ENCODE measurements at regions of chr19 and their contacts with region 1.

Region 1: DNA sequence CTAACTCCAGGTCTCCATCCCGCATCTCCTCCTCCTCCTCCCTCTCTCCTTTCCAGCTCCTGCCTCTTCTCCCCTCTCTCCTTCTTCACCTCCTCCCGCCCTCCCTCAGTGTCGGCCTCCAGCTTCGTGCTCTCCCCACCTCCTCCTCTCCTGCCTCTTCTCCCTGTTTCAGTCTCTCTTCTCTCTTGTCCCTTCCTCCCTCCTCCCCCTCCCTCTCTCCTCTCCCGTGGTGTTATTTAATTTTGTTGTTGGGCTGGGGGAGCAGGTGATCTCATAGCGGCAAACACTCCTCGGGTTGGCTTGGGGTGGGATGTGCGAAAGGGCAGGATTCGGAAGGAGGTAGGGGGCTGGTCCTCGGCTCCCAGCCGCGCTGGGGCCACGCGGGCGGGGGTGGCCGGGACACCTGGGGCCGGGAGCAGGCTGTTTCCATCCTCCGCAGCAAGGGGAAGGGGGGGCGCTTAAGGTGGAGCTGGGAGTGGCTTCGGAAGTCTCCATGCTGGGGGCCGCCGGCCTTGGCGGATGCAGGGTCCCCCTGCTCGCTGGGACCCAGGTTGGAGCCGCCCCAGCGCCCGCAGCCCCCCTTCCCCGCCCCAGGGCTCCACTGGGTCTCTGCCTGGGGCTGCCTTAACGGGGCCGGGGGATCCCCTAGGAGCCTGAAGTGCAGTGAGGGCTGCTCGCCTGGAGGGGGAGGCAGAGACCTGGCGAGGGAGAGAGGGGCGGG is at the start of gene CA11:
- DNase-seq: peak; percentile 94 to 95
- H3K4me3 ChIP-seq: peak within 1 kb of the TSS; percentile 56
- H3K4me3 Mint-ChIP-seq: peak within 1 kb of the TSS; percentile 77
- H3K27ac Mint-ChIP-seq: peak within 1 kb of the TSS; percentile 69
- H3K4me1 ChIP-seq: peaks cover 9% of the 10 kb centered on the region; the same call in 1 of the 2 replicates
- H3K4me1 Mint-ChIP-seq: peaks cover 16% of the 10 kb centered on the region
- H3K27me3 ChIP-seq: no peaks in the 10 kb centered on the region
- H3K27me3 Mint-ChIP-seq: no peaks in the 10 kb centered on the region
- CTCF ChIP-seq: peak; percentile 93 to 96
- total RNA-seq, gene CA11: 10.5 and 15.9 TPM in 2 replicates

Region 2: DNA sequence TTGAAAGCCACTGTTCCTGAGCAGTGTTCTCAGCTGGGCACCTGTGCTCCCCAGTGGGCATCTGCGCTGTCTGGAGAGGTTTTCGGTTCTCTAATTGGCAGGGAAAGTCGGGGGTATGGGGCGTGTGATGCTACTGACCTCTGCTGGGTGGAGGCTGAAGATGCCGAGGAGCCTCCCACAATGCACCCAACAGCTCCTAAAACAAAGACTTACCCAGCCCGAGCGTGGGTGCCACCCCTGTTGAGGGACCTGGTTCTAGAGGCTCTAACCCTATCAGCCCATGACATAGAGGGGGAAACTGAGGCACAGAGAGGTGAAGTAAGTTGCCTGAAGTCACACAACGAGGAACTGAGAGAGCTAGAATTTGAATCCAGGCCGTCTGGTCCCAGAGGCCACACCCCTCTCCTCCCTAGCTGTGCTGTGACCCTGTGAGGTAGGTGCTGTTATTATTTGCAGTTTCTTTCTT is 37.3 kb before region 1 on chr19:
- CTCF ChIA-PET with region 1: no interaction called
- POLR2A ChIA-PET with region 1: no interaction called
- intact Hi-C with region 1: no loop called
- DNase-seq: peak in 1 of 2 experiments; percentile 70
- H3K4me3 ChIP-seq: no peak overlapping the region
- H3K4me3 Mint-ChIP-seq: peak overlapping the region; percentile 54
- H3K27ac Mint-ChIP-seq: no peak overlapping the region
- H3K4me1 ChIP-seq: no peaks in the 10 kb centered on the region
- H3K4me1 Mint-ChIP-seq: peaks cover 7% of the 10 kb centered on the region
- H3K27me3 ChIP-seq: no peaks in the 10 kb centered on the region
- H3K27me3 Mint-ChIP-seq: no peaks in the 10 kb centered on the region
- CTCF ChIP-seq: peak; percentile 82 to 86

Region 3: GRCh38 chr19:48618916-48619691 is 27.1 kb before region 1 on chr19 and contains the starts of genes RPL18 and SPHK2:
- CTCF ChIA-PET with region 1: no interaction called
- POLR2A ChIA-PET with region 1: interaction called, 12 read pairs
- intact Hi-C with region 1: no loop called
- DNase-seq: peak; percentile 99
- H3K4me3 ChIP-seq: peak within 1 kb of the TSS; percentile 85
- H3K4me3 Mint-ChIP-seq: peak within 1 kb of the TSS; percentile 96
- H3K27ac Mint-ChIP-seq: peak within 1 kb of the TSS; percentile 98
- H3K4me1 ChIP-seq: peaks cover 39% of the 10 kb centered on the region
- H3K4me1 Mint-ChIP-seq: peaks cover 36% of the 10 kb centered on the region
- H3K27me3 ChIP-seq: no peaks in the 10 kb centered on the region
- H3K27me3 Mint-ChIP-seq: no peaks in the 10 kb centered on the region
- CTCF ChIP-seq: no peak
- total RNA-seq, gene RPL18: 1,812 and 1,896 TPM in 2 replicates
- total RNA-seq, gene SPHK2: 134 and 140 TPM in 2 replicates

Region 4: GRCh38 chr19:48668332-48668731 is 22.2 kb after region 1 on chr19:
- CTCF ChIA-PET with region 1: no interaction called
- POLR2A ChIA-PET with region 1: no interaction called
- intact Hi-C with region 1: no loop called
- DNase-seq: no peak
- H3K4me3 ChIP-seq: no peak overlapping the region
- H3K4me3 Mint-ChIP-seq: no peak overlapping the region
- H3K27ac Mint-ChIP-seq: no peak overlapping the region
- H3K4me1 ChIP-seq: peaks cover 16% of the 10 kb centered on the region
- H3K4me1 Mint-ChIP-seq: peaks cover 7% of the 10 kb centered on the region
- H3K27me3 ChIP-seq: no peaks in the 10 kb centered on the region
- H3K27me3 Mint-ChIP-seq: no peaks in the 10 kb centered on the region
- CTCF ChIP-seq: no peak

Region 5: GRCh38 chr19:48685583-48685982 is 39.4 kb after region 1 on chr19:
- CTCF ChIA-PET with region 1: interaction called, 4 read pairs
- POLR2A ChIA-PET with region 1: no interaction called
- intact Hi-C with region 1: loop called (anchors 5 kb)
- DNase-seq: peak; percentile 68 to 74
- H3K4me3 ChIP-seq: no peak overlapping the region
- H3K4me3 Mint-ChIP-seq: peak overlapping the region; percentile 11
- H3K27ac Mint-ChIP-seq: peak overlapping the region; percentile 54
- H3K4me1 ChIP-seq: peaks cover 39% of the 10 kb centered on the region
- H3K4me1 Mint-ChIP-seq: peaks cover 11% of the 10 kb centered on the region
- H3K27me3 ChIP-seq: no peaks in the 10 kb centered on the region
- H3K27me3 Mint-ChIP-seq: no peaks in the 10 kb centered on the region
- CTCF ChIP-seq: no peak

Region 6: DNA sequence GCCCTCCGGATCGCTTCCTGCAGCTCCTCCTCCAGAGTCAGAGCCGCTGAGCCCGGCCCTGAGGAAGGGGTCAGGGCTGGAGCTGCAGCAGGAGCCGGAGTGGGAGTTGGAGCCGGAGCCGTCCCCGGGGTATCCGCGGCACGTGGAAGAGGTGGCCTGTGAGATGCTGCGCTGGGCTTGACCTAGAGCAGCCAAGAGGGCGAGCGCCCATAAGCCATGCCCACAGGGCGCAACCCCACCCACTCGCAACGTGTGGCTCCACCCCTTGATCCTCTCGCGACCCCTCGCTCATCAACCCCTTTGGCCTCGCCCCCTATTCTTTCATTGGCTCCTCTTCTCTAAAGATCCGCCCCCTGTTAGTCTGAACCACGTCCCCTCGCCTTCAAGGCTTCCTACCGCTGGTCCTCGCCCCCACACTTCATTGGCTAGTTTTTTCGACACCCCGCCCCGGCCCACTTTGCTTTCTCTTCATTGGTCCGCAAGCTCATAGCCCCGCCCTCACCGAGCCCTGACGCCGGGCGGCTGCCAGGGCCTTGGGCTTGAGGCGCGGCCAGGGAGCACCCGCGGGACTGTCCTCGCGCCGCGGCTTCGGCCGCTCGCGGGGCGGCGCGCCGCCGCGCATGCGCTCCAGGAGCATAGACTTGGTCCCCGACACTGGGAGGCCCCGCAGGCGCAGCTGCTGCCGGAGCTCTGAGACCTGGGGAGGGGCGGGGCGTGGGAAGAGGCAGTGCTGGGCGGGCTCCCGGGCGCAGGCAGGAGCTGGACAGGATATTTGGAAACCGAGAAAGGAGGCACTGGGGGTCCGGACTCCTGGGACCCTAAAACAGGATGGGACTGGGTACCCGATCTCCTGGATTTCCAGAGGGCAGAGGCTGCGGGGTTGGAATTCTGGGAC is 68.0 kb after region 1 on chr19:
- CTCF ChIA-PET with region 1: interaction called, 8 read pairs
- POLR2A ChIA-PET with region 1: interaction called, 9 read pairs
- intact Hi-C with region 1: loop called (anchors 1 kb)
- DNase-seq: peak; percentile 100
- H3K4me3 ChIP-seq: peak overlapping the region; percentile 75
- H3K4me3 Mint-ChIP-seq: peak overlapping the region; percentile 84
- H3K27ac Mint-ChIP-seq: peak overlapping the region; percentile 90
- H3K4me1 ChIP-seq: peaks cover 16% of the 10 kb centered on the region
- H3K4me1 Mint-ChIP-seq: peaks cover 33% of the 10 kb centered on the region
- H3K27me3 ChIP-seq: no peaks in the 10 kb centered on the region
- H3K27me3 Mint-ChIP-seq: no peaks in the 10 kb centered on the region
- CTCF ChIP-seq: no peak

Region 7: DNA sequence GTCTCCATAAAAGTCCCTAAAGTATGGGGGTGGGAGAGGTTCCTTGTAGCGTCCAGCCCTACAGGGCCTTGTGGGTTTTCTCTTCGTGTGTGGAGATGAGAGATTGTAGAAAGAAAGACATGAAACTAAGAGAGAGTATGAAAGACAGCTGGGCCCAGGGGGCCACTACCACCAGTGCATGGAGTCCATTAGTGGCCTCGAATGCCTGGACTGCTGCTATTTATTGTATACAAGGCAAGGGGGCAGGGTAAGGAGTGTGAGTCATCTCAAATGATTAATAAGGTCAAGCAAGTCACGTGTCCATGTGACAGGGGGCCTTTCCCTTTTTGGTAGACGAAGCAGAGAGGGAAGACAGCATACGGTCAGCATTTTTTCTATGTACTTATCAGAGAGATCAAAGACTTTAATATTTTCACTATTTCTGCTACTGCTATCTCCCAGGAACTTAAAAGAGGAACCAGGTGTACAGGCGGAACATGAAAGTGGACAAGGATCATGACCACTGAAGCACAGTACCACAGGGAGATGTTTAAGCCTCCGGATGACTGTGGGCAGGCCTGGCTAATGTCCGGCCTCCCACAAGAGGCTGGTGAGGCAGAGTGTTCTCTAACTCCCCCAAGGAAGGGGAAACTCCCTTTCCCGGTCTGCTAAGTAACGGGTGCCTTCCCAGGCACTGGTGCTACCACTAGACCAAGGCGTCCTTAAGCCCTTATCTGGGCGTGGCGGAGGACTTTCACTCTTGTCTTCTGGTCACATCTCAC is 134.7 kb after region 1 on chr19:
- CTCF ChIA-PET with region 1: no interaction called
- POLR2A ChIA-PET with region 1: no interaction called
- intact Hi-C with region 1: loop called (anchors 1 kb)
- DNase-seq: peak; percentile 77 to 86
- H3K4me3 ChIP-seq: no peak overlapping the region
- H3K4me3 Mint-ChIP-seq: no peak overlapping the region
- H3K27ac Mint-ChIP-seq: peak overlapping the region; percentile 26
- H3K4me1 ChIP-seq: peaks cover 23% of the 10 kb centered on the region
- H3K4me1 Mint-ChIP-seq: peaks cover 18% of the 10 kb centered on the region
- H3K27me3 ChIP-seq: no peaks in the 10 kb centered on the region
- H3K27me3 Mint-ChIP-seq: no peaks in the 10 kb centered on the region
- CTCF ChIP-seq: no peak

Region 8: GRCh38 chr19:49113762-49114629 is 467.8 kb after region 1 on chr19 and contains the start of gene LIN7B:
- CTCF ChIA-PET with region 1: no interaction called
- POLR2A ChIA-PET with region 1: no interaction called
- intact Hi-C with region 1: no loop called
- DNase-seq: peak; percentile 73 to 92
- H3K4me3 ChIP-seq: peak within 1 kb of the TSS; percentile 92
- H3K4me3 Mint-ChIP-seq: peak within 1 kb of the TSS; percentile 95
- H3K27ac Mint-ChIP-seq: peak within 1 kb of the TSS; percentile 64
- H3K4me1 ChIP-seq: peaks cover 18% of the 10 kb centered on the region
- H3K4me1 Mint-ChIP-seq: peaks cover 32% of the 10 kb centered on the region
- H3K27me3 ChIP-seq: no peaks in the 10 kb centered on the region
- H3K27me3 Mint-ChIP-seq: no peaks in the 10 kb centered on the region
- CTCF ChIP-seq: peak; percentile 42 to 62
- total RNA-seq, gene LIN7B: 11.8 and 12.7 TPM in 2 replicates

Measured in Caco-2 (cell line).